ENCODE measurements at regions of chr6 and their contacts with region 1.

Region 1: DNA sequence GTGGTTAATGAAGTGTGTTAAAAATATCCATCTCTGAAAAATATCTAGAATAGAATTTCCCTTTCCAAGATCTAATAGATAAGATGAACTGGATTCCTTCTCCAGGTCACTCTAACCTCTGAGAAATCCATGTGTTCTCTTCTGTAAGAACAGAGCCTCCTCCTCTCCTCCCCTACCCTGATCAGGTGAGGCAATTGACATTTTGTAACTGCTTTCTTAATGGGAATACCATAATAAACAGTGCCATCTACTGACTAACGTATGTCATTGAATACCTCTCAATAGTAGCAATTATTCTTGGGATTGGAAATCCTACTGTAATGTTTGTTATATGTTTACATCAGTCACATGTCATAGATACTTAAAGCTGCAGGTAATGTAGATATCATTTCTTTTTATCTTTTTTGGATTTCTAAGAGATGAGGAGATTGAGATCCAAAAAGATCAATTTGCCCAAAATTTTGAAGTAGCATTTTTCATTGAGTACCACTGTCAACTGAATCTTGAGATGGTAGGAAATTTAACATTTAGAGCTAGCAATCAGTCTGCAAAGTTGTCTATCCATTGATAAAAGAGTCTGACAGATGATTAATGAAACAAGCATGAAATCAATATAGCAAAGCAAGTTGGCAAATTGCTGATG is 365.8 kb upstream of the HSF2 start:
- DNase-seq: no peak
- ATAC-seq: peak; percentile 87

Region 2: GRCh38 chr6:121430514-121431460 is 602.9 kb before region 1 on chr6:
- intact Hi-C with region 1: loop called (anchors 2 kb)
- DNase-seq: no peak
- ATAC-seq: no peak

Region 3: DNA sequence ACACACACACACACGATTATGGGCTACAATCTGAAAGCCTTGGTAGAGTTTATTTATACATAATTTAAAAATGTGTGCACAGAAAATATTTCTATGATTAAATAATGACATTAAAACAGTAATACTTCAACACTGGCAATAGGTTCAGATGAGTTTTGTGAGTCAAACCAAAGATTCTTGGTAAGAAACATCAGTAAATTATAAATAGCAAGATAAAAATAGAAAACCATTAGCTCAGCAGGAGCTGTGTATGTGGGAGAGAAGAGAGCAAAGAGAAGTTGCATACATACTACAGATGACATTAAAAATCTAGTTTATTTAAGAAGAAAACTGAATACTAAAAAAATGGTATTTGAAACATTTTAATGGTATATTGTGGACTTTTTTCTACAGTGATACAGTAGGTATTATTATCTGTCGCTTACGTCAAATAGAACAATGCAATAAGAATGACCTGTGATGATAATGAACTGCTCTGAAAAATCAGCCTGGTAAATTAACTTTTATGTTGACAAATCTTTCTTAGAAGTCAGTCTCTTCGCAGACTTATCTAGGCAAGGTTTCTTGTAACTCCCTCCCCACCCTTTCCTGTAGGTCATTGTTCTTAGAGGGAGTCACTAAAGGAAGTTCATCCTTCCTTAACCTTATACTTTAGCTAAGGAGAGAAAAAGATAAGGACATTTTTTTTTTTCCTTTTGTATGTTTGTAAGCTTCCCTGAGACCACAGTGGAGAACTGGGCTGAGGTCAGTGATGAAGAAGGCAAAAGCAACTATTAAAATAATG is 448.9 kb before region 1 on chr6:
- intact Hi-C with region 1: loop called (anchors 10 kb)
- DNase-seq: no peak
- ATAC-seq: no peak

Region 4: DNA sequence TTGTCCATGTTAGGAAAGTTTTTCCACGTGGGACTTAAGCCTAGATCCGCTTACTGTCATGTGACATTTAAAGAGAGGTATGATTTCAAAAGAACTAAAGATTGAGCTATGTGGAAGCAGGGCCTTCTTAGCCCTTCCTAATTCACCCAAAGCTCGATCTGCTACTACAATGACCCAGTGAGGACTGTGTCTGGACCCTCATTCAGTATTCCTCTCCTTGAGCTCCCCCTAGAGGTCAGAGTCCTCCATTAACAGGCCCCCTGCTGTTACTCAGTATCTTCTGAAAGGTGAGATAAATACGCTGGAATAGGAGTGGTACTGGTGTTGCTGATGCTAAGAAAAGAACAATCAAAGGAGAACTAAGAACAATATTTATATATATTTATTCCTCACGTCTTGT is 184.2 kb before region 1 on chr6:
- intact Hi-C with region 1: loop called (anchors 5 kb)
- DNase-seq: no peak
- ATAC-seq: peak; percentile 78

Region 5: GRCh38 chr6:122008101-122008999 is 25.3 kb before region 1 on chr6:
- intact Hi-C with region 1: loop called (anchors 2 kb)
- DNase-seq: no peak
- ATAC-seq: peak; percentile 97

Region 6: DNA sequence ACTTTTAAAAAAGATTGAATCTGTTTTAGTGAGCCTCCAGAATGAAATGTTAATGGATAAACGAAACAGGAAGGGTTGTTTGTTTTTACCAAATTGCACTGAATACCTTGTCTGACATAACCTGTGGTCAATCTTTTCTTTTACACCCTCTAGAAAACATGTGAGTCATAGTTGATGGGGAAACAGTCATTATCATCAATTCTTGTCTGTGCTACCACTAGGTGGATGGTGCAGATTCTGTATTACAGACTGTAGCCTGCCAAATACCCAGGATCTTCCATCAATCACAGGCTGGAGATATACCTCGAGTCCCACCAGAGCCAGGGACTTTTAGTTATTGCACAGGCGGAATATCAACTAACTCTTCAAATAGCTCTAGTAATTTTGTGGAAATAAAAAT is 547.1 kb after region 1 on chr6:
- intact Hi-C with region 1: no loop called
- DNase-seq: no peak
- ATAC-seq: no peak

Measured in Right ventricle myocardium inferior (tissue), 1 donor.